Activated naive CD4-positive, alpha-beta T cell treated with anti-CD3 and anti-CD28 coated beads, Interleukin-2, amount 10 ng/mL, durations not matched to agents 7 days and 5 days (primary cell): ENCODE measurements at regions of chr2 and their contacts with region 1.

Region 1: GRCh38 chr2:68225119-68225632 is 27.2 kb downstream of the PPP3R1 start:
- DNase-seq: peak; percentile 38
- H3K4me3 Mint-ChIP-seq: no peak overlapping the region
- H3K27ac Mint-ChIP-seq: no peak overlapping the region
- H3K4me1 Mint-ChIP-seq: peaks cover 43% of the 10 kb centered on the region
- H3K27me3 Mint-ChIP-seq: no peaks in the 10 kb centered on the region

Region 2: DNA sequence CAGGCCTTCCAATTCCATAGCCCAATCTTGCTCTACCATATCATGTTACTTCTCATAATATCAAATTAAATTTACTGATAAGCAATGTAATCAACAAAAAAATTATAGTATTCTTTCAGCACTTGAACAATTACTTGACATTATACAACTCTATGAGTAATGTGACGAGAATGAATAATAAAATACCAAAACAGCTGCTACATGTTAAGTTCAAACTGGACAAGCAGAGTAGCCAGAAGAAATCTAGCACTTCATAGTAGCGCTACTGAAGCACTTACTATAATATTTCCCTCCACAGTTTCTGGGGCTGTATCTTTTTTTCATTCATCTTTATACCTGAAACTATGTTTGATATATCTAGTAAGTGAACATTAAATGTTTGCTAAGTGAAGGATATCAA is 12.2 kb after region 1 on chr2:
- CTCF ChIA-PET with region 1: interaction called, 10 read pairs
- DNase-seq: no peak
- H3K4me3 Mint-ChIP-seq: no peak overlapping the region
- H3K27ac Mint-ChIP-seq: no peak overlapping the region
- H3K4me1 Mint-ChIP-seq: peaks cover 35% of the 10 kb centered on the region
- H3K27me3 Mint-ChIP-seq: no peaks in the 10 kb centered on the region